Activated B cell treated with CpG ODN at 0.5 μM for 24 hours (primary cell): ENCODE measurements at regions of chr1 and their contacts with region 1.

Region 1: DNA sequence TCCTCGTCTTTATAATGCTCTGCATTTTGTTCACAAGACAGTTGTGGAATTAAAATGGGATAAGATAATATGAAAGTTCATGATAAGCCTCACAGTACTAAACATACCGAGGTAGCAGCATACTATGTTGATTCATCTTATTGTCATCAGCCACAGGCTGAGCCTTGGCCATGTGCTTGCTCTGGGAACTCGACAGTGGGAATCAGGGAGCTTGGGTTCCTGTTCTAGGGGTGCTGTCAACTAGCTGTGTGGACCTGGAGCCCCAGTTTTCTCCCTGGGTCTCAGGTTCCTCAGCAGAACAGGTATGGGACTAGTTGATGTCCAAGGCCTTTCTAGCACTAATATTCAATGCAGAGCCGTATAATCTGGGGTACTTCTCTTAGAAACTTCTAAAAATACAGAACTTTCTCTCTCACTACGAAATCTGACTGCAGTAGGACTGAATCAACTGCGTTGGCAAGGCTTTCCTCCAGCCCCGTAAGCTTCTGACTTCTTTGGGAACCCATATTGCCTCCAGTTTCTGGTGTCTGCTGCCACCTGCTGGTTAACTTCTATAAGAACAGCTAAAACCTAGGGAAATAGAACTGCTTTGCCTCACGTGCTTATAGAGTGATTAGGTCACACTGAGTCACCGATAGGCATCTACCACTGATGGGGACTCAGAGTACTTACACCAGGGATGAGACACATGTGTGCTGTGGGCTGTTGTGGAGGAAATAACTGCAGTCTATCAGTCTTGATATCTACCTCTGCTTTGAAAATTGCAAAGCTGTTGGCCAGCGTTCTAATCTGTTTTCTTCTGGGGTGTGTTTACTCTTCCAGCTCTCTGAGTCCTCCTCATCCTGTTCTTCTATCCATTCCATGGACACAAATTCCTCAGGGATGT is 110.9 kb downstream of the RGL1 start:
- DNase-seq: no peak
- ATAC-seq: peak; percentile 57
- H3K4me3 Mint-ChIP-seq: no peak overlapping the region
- H3K27ac Mint-ChIP-seq: peak overlapping the region; percentile 0
- H3K4me1 Mint-ChIP-seq: peaks cover 36% of the 10 kb centered on the region
- H3K27me3 Mint-ChIP-seq: no peaks in the 10 kb centered on the region
- CTCF ChIP-seq: peak; percentile 60

Region 2: GRCh38 chr1:182962554-182963115 is 953.2 kb before region 1 on chr1:
- CTCF ChIA-PET with region 1: interaction called, 4 read pairs
- POLR2A ChIA-PET with region 1: no interaction called
- intact Hi-C with region 1: loop called (anchors 1 kb)
- DNase-seq: no peak
- ATAC-seq: peak; percentile 100
- H3K4me3 Mint-ChIP-seq: peak overlapping the region; percentile 67
- H3K27ac Mint-ChIP-seq: peak overlapping the region; percentile 76
- H3K4me1 Mint-ChIP-seq: peaks cover 8% of the 10 kb centered on the region
- H3K27me3 Mint-ChIP-seq: peaks cover 2% of the 10 kb centered on the region
- CTCF ChIP-seq: no peak

Region 3: GRCh38 chr1:183635606-183636333 is 280.1 kb before region 1 on chr1 and contains the start of gene ARPC5:
- CTCF ChIA-PET with region 1: interaction called, 7 read pairs
- POLR2A ChIA-PET with region 1: interaction called, 7 read pairs
- intact Hi-C with region 1: loop called (anchors 1 kb)
- DNase-seq: peak; percentile 95
- ATAC-seq: peak; percentile 89
- H3K4me3 Mint-ChIP-seq: peak within 1 kb of the TSS; percentile 100
- H3K27ac Mint-ChIP-seq: peak within 1 kb of the TSS; percentile 100
- H3K4me1 Mint-ChIP-seq: peaks cover 46% of the 10 kb centered on the region
- H3K27me3 Mint-ChIP-seq: no peaks in the 10 kb centered on the region
- CTCF ChIP-seq: no peak
- total RNA-seq, gene ARPC5: 193 and 224 TPM in 2 replicates

Region 4: GRCh38 chr1:183685112-183685713 is 230.7 kb before region 1 on chr1:
- CTCF ChIA-PET with region 1: interaction called, 98 read pairs
- POLR2A ChIA-PET with region 1: interaction called, 10 read pairs
- intact Hi-C with region 1: loop called (anchors 1 kb)
- DNase-seq: no peak
- ATAC-seq: peak; percentile 61
- H3K4me3 Mint-ChIP-seq: no peak overlapping the region
- H3K27ac Mint-ChIP-seq: no peak overlapping the region
- H3K4me1 Mint-ChIP-seq: peaks cover 8% of the 10 kb centered on the region
- H3K27me3 Mint-ChIP-seq: peaks cover 25% of the 10 kb centered on the region
- CTCF ChIP-seq: no peak

Region 5: DNA sequence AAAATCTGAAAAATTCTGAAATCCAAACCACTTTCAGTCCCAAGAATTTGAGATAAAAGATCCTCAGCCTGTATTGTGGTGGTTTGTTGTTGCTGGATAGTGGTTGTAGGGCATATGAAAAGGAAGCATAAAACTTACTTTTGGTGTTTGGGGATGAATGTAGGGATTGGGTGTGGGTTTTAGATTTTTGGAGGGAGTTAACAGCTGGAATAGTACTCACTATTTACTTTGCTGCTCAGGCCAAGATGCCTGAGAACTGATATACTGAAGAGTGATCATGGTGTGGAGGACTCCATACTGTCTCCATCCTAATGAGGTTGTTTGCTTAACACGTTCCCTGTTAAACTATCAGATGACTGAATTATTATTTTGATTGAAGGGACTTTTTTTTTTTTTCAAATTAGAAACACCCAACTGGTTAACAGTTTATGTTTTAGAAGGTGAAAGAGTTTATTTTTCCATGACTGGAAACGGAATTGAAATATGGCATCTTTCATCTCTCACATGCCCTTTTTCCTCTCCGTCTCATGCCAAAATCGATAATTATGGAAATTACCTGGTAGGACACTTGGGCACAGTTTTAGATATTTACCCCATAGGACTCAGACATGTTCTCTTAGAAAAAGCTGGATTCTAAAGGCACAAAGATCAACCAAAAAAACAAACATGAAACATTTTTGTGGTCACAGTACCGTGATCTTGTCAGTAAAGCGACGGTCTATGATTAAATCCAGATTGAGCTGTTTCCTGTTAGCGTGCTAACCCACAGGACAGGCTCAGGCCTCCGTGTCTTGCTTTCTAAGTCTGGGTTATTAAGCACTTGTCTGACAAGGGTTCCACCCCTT is 73.7 kb before region 1 on chr1:
- CTCF ChIA-PET with region 1: interaction called, 9 read pairs
- POLR2A ChIA-PET with region 1: interaction called, 11 read pairs
- intact Hi-C with region 1: loop called (anchors 1 kb)
- DNase-seq: no peak
- ATAC-seq: peak; percentile 82
- H3K4me3 Mint-ChIP-seq: peak overlapping the region; percentile 42
- H3K27ac Mint-ChIP-seq: peak overlapping the region; percentile 69
- H3K4me1 Mint-ChIP-seq: peaks cover 21% of the 10 kb centered on the region
- H3K27me3 Mint-ChIP-seq: peaks cover 2% of the 10 kb centered on the region
- CTCF ChIP-seq: no peak

Region 6: GRCh38 chr1:184051485-184052193 is 135.8 kb after region 1 on chr1 and contains the start of gene TSEN15:
- CTCF ChIA-PET with region 1: no interaction called
- POLR2A ChIA-PET with region 1: interaction called, 7 read pairs
- intact Hi-C with region 1: loop called (anchors 2 kb)
- DNase-seq: peak; percentile 76
- ATAC-seq: peak; percentile 95
- H3K4me3 Mint-ChIP-seq: peak within 1 kb of the TSS; percentile 98
- H3K27ac Mint-ChIP-seq: peak within 1 kb of the TSS; percentile 98
- H3K4me1 Mint-ChIP-seq: peaks cover 36% of the 10 kb centered on the region
- H3K27me3 Mint-ChIP-seq: peaks cover 26% of the 10 kb centered on the region
- CTCF ChIP-seq: no peak
- total RNA-seq, gene TSEN15: 60.8 and 61.2 TPM in 2 replicates